Activated T-helper 1 cell treated with anti-CD3 and anti-CD28 coated beads, Interleukin-12 subunit alpha, Interleukin-12 subunit beta, Interleukin-2, Interleukin-4 antibody, amounts not matched to agents 30 ng/mL and 10 ng/mL and 1 ng/mL, durations not matched to agents 14 hours and 24 hours and 36 hours (primary cell): ENCODE measurements at regions of chr10 and their contacts with region 1.

Region 1: DNA sequence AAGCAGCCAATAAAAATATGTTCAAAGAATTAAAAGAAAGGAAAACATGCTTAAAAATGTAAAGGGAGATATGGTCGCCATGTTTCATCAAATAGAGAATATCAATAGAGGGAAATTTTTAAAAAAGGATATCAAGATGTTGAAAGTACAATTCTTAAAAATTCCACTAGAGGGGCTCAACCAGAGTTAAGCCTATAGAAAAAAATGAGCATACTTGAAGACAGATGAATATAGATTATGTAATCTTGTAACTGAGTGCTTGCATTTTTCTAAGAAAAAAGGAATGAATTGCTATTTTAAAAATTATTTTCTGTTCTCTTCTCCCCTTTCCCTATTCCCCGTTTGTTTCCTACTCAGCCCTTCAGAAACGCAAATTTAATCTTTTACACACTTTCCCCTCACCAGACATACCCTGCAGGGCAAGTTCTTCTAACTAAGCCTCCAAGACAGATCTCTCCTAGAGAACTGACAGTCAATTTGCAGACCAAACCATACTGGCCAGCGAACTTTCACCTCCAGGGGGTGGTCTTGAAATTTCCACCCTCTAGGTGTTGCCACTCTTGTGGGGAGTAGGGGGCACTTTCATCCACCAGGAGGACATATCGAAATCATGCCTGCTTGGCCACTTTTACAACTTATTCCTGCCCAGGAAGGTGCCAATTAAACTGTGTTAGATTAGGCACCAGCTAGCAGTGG is 67.7 kb downstream of the NSUN6 start:
- DNase-seq: no peak
- H3K4me3 Mint-ChIP-seq: peak overlapping the region; percentile 9
- H3K27ac Mint-ChIP-seq: peak overlapping the region; percentile 14
- H3K4me1 Mint-ChIP-seq: peaks cover 25% of the 10 kb centered on the region
- H3K27me3 Mint-ChIP-seq: no peaks in the 10 kb centered on the region

Region 2: DNA sequence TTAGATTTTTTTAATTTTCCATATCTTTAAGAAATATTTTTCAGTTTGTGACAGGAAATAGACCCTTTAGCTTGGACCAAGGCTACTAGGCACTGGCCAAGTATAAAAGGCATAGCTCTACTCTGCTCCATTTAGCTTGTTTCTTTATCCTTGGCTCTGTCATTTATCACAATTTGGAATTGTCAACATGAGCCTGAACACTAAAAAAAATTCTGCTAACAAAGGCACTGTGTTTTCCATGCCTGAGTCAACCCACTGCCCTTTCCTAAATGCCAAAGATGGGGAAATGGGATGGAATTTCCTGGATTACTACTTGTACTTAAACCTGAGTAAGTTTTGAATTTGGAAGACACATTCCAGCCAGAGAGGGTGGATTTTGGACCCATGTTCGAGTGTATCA is 60.7 kb before region 1 on chr10:
- intact Hi-C with region 1: no loop called
- DNase-seq: no peak
- H3K4me3 Mint-ChIP-seq: no peak overlapping the region
- H3K27ac Mint-ChIP-seq: no peak overlapping the region
- H3K4me1 Mint-ChIP-seq: no peaks in the 10 kb centered on the region
- H3K27me3 Mint-ChIP-seq: no peaks in the 10 kb centered on the region

Region 3: DNA sequence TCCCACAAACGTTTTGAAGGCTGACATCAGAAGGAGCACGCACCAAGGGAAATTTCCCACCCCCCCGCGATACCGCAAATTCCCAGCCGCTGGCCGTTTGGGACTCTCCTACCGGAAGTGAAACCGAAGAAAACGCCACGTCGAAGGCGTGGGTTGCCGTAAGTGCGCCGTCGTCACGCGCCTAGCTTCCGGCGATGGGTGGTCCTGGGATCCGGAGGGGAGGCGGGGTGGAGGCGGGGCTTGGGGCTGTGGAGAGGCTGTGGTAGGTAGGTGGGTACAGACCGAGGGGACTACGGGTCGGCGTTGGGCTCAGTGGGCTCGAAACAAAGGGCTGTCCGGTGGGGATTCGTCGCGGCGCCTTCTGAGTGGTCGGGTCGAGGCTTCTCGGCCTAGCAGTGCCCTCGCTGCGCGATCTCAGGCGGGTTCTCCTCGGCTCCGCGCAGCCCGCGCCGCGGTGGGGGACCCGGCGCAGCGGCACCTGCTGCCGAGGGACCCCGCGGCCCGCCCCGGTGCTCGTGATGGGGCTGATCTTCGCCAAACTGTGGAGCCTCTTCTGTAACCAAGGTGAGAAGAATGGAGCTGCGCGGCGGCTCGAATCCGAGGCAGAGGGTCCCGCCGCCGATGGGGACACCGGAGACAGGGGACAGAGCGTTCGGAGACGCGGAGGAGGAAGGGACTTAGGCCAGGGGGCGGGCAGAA is 75.5 kb after region 1 on chr10 and contains the start of gene ARL5B:
- intact Hi-C with region 1: loop called (anchors 5 kb)
- DNase-seq: peak; percentile 92
- H3K4me3 Mint-ChIP-seq: peak within 1 kb of the TSS; percentile 100
- H3K27ac Mint-ChIP-seq: peak within 1 kb of the TSS; percentile 98
- H3K4me1 Mint-ChIP-seq: peaks cover 38% of the 10 kb centered on the region
- H3K27me3 Mint-ChIP-seq: no peaks in the 10 kb centered on the region
- total RNA-seq, gene ARL5B: 14.4 and 15.2 TPM in 2 replicates

Region 4: GRCh38 chr10:18719811-18720210 is 136.1 kb after region 1 on chr10:
- intact Hi-C with region 1: no loop called
- DNase-seq: no peak
- H3K4me3 Mint-ChIP-seq: no peak overlapping the region
- H3K27ac Mint-ChIP-seq: no peak overlapping the region
- H3K4me1 Mint-ChIP-seq: no peaks in the 10 kb centered on the region
- H3K27me3 Mint-ChIP-seq: peaks cover 3% of the 10 kb centered on the region